ENCODE measurements at regions of chr6 and their contacts with region 1.

Region 1: GRCh38 chr6:144063744-144064401 is 31.5 kb downstream of the SF3B5 start:
- DNase-seq: peak; percentile 94 to 97 (median 96)
- ATAC-seq: peak; percentile 98
- H3K4me3 ChIP-seq: peak overlapping the region; percentile 76
- H3K27ac ChIP-seq: peak overlapping the region; percentile 83
- H3K4me1 ChIP-seq: peaks cover 15 to 17% of the 10 kb centered on the region in 2 experiments; a peak in 4 of 5 replicates
- H3K27me3 ChIP-seq: no peaks in the 10 kb centered on the region; a peak in 1 of 5 replicates
- CTCF ChIP-seq: peak; percentile 48 to 77 (median 67); a peak in 4 of 6 replicates
- EP300 ChIP-seq: no peak
- POLR2A ChIP-seq: peak; percentile 90
- RAD21 ChIP-seq: peak; percentile 20 to 46; a peak in 3 of 4 replicates

Region 2: GRCh38 chr6:143634493-143634892 is 429.4 kb before region 1 on chr6:
- CTCF ChIA-PET with region 1: no interaction called
- POLR2A ChIA-PET with region 1: no interaction called
- in situ Hi-C with region 1: no loop called
- intact Hi-C with region 1: no loop called
- DNase-seq: no peak
- ATAC-seq: no peak
- H3K4me3 ChIP-seq: no peak overlapping the region
- H3K27ac ChIP-seq: no peak overlapping the region
- H3K4me1 ChIP-seq: no peaks in the 10 kb centered on the region
- H3K27me3 ChIP-seq: no peaks in the 10 kb centered on the region
- CTCF ChIP-seq: no peak
- EP300 ChIP-seq: no peak
- POLR2A ChIP-seq: no peak
- RAD21 ChIP-seq: no peak

Region 3: DNA sequence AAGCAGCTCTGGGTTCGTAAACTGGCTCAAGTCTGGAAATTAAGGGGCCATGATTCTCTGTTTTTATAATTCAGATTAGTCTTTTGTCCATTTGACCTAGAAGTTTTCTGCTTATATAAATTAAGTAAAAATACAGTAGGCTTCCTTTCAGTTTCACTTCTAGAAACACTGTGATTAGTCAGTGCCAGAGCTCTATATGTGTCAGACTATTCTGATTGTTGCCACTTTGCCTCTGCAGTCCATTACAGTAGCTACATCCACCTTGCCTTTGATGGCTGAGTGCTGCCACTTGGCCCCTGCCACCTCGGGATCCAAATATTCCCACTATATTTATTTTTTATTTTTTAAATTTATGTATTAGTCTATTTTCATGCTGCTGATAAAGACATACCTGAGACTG is 191.7 kb before region 1 on chr6:
- CTCF ChIA-PET with region 1: no interaction called
- POLR2A ChIA-PET with region 1: no interaction called
- in situ Hi-C with region 1: no loop called
- intact Hi-C with region 1: no loop called
- DNase-seq: no peak
- ATAC-seq: no peak
- H3K4me3 ChIP-seq: no peak overlapping the region
- H3K27ac ChIP-seq: no peak overlapping the region
- H3K4me1 ChIP-seq: no peaks in the 10 kb centered on the region
- H3K27me3 ChIP-seq: no peaks in the 10 kb centered on the region
- CTCF ChIP-seq: no peak
- EP300 ChIP-seq: no peak
- POLR2A ChIP-seq: no peak
- RAD21 ChIP-seq: no peak

Region 4: DNA sequence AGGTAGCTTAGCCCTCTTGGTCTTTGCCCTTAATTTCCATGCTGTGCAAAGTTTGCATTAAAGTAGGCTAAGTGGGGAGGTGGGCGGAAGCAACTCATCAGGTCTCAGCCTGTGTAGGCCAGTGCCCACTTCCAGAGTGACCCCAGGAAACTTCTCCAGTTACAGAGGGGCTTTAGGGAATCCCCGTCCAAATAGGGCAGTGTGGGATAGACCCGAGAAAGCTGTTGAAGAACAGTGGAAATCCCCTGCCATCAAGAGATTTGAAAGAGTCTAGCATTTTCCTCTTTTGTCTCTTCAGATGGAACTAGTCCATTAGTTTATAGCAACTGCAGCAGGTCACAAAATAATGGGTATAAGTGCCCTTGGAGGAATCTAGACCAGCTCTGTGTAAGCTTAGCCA is 11.3 kb after region 1 on chr6:
- CTCF ChIA-PET with region 1: no interaction called
- POLR2A ChIA-PET with region 1: interaction called, 13 read pairs
- in situ Hi-C with region 1: no loop called
- intact Hi-C with region 1: no loop called
- DNase-seq: no peak
- ATAC-seq: no peak
- H3K4me3 ChIP-seq: no peak overlapping the region
- H3K27ac ChIP-seq: no peak overlapping the region
- H3K4me1 ChIP-seq: peaks cover 0 to 13% of the 10 kb centered on the region in 2 experiments; a peak in 2 of 5 replicates
- H3K27me3 ChIP-seq: no peaks in the 10 kb centered on the region; a peak in 1 of 5 replicates
- CTCF ChIP-seq: no peak
- EP300 ChIP-seq: no peak
- POLR2A ChIP-seq: no peak
- RAD21 ChIP-seq: no peak

Region 5: GRCh38 chr6:144087789-144088426 is 24.0 kb after region 1 on chr6:
- CTCF ChIA-PET with region 1: no interaction called
- POLR2A ChIA-PET with region 1: interaction called, 4 read pairs
- in situ Hi-C with region 1: no loop called
- intact Hi-C with region 1: loop called (anchors 2 kb)
- DNase-seq: peak; percentile 38 to 72 (median 54)
- ATAC-seq: peak; percentile 89
- H3K4me3 ChIP-seq: no peak overlapping the region
- H3K27ac ChIP-seq: peak overlapping the region; percentile 59
- H3K4me1 ChIP-seq: peaks cover 0 to 13% of the 10 kb centered on the region in 2 experiments; a peak in 4 of 5 replicates
- H3K27me3 ChIP-seq: no peaks in the 10 kb centered on the region
- CTCF ChIP-seq: peak; percentile 25 to 61 (median 54); a peak in 5 of 6 replicates
- EP300 ChIP-seq: no peak
- POLR2A ChIP-seq: no peak
- RAD21 ChIP-seq: peak; percentile 77 to 79

Measured in K562 (cell line).